Panc1 (cell line): ENCODE measurements at regions of chr9 and their contacts with region 1.

Region 1: GRCh38 chr9:70303268-70303667 is 44.5 kb downstream of the SMC5 start:
- DNase-seq: no peak
- ATAC-seq: no peak
- H3K4me3 ChIP-seq: no peak overlapping the region
- H3K27ac ChIP-seq: no peak overlapping the region
- H3K4me1 ChIP-seq: no peaks in the 10 kb centered on the region
- H3K27me3 ChIP-seq: no peaks in the 10 kb centered on the region
- CTCF ChIP-seq: no peak

Region 2: GRCh38 chr9:69885474-69885929 is 417.8 kb before region 1 on chr9:
- CTCF ChIA-PET with region 1: no interaction called
- POLR2A ChIA-PET with region 1: no interaction called
- in situ Hi-C with region 1: no loop called
- intact Hi-C with region 1: no loop called
- DNase-seq: no peak
- ATAC-seq: no peak
- H3K4me3 ChIP-seq: no peak overlapping the region
- H3K27ac ChIP-seq: no peak overlapping the region
- H3K4me1 ChIP-seq: no peaks in the 10 kb centered on the region; the same call in 1 of the 2 replicates
- H3K27me3 ChIP-seq: no peaks in the 10 kb centered on the region
- CTCF ChIP-seq: no peak

Region 3: DNA sequence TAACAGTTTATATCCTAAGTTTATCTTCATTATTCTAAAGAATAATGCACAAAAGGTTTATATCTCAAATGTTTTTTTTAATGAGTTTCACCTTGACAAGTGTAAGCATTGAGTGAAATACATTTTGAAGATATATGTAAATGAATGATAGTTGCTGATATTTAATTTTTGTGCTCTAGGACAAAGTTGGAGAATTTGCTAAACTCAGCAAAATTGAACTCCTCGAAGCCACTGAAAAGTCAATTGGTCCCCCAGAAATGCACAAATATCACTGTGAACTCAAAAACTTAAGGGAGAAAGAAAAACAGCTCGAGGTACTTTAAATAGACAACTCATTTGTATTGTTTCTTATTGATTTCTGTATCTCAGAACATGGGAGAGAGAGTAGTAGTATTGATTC is 25.0 kb before region 1 on chr9:
- CTCF ChIA-PET with region 1: no interaction called
- POLR2A ChIA-PET with region 1: no interaction called
- in situ Hi-C with region 1: no loop called
- intact Hi-C with region 1: no loop called
- DNase-seq: no peak
- ATAC-seq: no peak
- H3K4me3 ChIP-seq: no peak overlapping the region
- H3K27ac ChIP-seq: no peak overlapping the region
- H3K4me1 ChIP-seq: no peaks in the 10 kb centered on the region
- H3K27me3 ChIP-seq: no peaks in the 10 kb centered on the region
- CTCF ChIP-seq: no peak

Region 4: GRCh38 chr9:70324963-70325362 is 21.7 kb after region 1 on chr9:
- CTCF ChIA-PET with region 1: no interaction called
- POLR2A ChIA-PET with region 1: interaction called, 10 read pairs
- in situ Hi-C with region 1: no loop called
- intact Hi-C with region 1: no loop called
- DNase-seq: no peak
- ATAC-seq: no peak
- H3K4me3 ChIP-seq: no peak overlapping the region
- H3K27ac ChIP-seq: no peak overlapping the region
- H3K4me1 ChIP-seq: no peaks in the 10 kb centered on the region
- H3K27me3 ChIP-seq: no peaks in the 10 kb centered on the region
- CTCF ChIP-seq: no peak